ENCODE measurements at regions of chr7 and their contacts with region 1.

Region 1: DNA sequence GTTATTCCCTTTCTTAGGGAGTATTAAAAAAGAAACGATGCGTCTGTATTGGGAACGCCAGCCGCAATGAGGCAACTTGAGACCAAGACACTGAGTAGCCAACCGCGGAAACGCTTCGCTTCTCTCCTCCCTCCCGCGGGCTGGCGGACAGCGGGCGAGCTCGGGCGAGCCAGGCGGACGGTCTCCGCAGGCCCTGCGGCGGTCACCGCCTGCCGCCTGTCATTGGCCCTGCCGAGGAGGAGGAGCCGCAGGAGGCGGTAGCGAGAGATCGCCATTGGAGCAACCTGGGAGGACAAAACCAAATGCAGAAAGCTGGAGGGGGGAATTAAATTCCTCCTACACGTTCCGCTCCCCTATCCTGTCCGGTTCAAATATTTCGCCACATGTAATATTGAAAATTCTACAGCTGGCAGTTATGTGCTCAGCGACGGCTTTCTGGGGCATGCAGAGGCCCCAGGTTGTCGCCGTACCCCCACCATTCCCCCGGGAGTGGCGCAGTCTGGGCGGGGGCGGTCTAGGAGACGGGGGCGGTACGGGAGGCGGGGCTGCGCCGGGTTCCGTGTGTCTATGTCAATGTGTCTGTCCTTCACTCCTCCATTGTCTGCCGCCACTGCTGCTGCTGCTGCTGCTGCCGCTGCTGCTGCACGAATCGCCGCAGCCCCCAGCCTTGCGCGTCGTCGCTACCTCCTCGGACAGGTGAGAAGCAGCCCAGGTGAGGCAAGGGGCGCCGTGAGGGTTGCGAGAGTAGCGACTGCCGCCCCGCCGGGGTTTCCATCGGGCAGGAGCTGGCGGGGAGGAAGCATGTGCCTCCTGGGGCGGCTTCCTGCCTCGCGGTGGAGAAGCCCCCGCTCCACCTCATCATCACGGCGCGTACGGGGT is at the starts of genes ANKMY2 and BZW2:
- DNase-seq: peak; percentile 85 to 98 (median 92)
- ATAC-seq: peak; percentile 85
- H3K4me3 ChIP-seq: peak within 1 kb of the TSS; percentile 89
- H3K4me3 Mint-ChIP-seq: peak within 1 kb of the TSS; percentile 99
- H3K27ac ChIP-seq: peak within 1 kb of the TSS; percentile 75 to 88
- H3K27ac Mint-ChIP-seq: peak within 1 kb of the TSS; percentile 90
- H3K4me1 ChIP-seq: peaks cover 28% of the 10 kb centered on the region
- H3K4me1 Mint-ChIP-seq: peaks cover 78% of the 10 kb centered on the region
- H3K27me3 ChIP-seq: no peaks in the 10 kb centered on the region
- H3K27me3 Mint-ChIP-seq: no peaks in the 10 kb centered on the region
- CTCF ChIP-seq: no peak
- total RNA-seq, gene ANKMY2: 3.3 to 5.1 TPM
- total RNA-seq, gene BZW2: 15.1 to 17.2 TPM

Region 2: DNA sequence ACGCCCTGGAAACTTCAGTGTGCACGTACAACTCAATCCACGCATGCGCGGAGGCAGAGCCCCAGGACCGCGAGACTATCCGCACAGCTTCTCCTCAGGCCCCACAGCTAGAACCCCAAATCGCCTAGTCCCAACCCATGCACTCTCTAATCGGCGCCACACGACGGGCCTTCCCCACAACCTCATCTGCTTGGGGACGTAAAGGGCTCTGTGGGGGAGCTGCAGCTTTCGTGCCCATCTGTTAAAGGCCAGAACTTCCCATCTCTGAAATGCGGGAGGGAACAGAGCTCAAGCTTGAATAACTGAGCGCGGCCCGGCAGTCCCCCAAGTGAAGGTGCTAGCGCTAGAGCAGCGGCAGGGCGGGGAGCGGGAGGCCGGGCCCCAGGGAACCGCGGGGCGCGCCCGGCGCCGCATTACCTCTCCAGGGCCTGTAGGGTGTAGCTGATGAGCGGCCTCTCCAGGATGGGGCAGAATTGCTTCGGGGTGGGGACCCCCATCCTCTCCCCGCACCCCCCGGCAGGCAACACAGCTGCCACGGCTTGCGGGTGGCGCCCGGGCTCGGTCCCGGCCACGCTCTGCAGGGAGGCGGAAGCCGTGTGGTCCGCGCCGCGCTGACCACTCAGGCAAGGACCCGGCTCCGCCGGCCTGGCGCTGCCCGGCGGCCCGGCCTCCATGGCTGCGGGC is 225.0 kb before region 1 on chr7:
- CTCF ChIA-PET with region 1: no interaction called
- POLR2A ChIA-PET with region 1: interaction called, 42 read pairs
- intact Hi-C with region 1: loop called (anchors 5 kb)
- DNase-seq: peak; percentile 50 to 94 (median 78)
- ATAC-seq: peak; percentile 89
- H3K4me3 ChIP-seq: peak overlapping the region; percentile 67
- H3K4me3 Mint-ChIP-seq: peak overlapping the region; percentile 90
- H3K27ac ChIP-seq: peak overlapping the region; percentile 77 to 80
- H3K27ac Mint-ChIP-seq: peak overlapping the region; percentile 87
- H3K4me1 ChIP-seq: peaks cover 14% of the 10 kb centered on the region
- H3K4me1 Mint-ChIP-seq: peaks cover 23% of the 10 kb centered on the region
- H3K27me3 ChIP-seq: no peaks in the 10 kb centered on the region
- H3K27me3 Mint-ChIP-seq: no peaks in the 10 kb centered on the region
- CTCF ChIP-seq: peak; percentile 33

Region 3: DNA sequence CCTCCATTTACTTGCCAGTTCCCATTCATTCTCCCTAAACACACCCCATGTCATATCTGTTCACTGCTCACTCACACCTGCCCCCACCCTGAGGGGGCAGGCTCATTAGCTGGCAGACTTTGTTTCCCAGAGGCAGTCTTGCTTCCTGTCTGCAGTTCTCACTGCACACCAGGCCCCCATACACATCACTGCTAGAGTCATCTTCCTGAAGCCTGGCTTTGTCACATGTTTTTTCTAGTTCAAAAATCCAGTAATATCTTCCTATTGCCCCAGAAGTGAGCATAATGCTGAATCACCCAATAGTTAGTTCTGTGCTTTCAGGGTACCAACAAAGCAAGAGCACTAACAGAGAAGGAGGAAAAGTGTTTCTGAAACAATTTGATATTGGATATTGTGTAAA is 117.3 kb before region 1 on chr7:
- CTCF ChIA-PET with region 1: no interaction called
- POLR2A ChIA-PET with region 1: no interaction called
- intact Hi-C with region 1: no loop called
- DNase-seq: no peak
- ATAC-seq: no peak
- H3K4me3 ChIP-seq: no peak overlapping the region
- H3K4me3 Mint-ChIP-seq: no peak overlapping the region
- H3K27ac ChIP-seq: no peak overlapping the region
- H3K27ac Mint-ChIP-seq: no peak overlapping the region
- H3K4me1 ChIP-seq: no peaks in the 10 kb centered on the region
- H3K4me1 Mint-ChIP-seq: no peaks in the 10 kb centered on the region
- H3K27me3 ChIP-seq: no peaks in the 10 kb centered on the region
- H3K27me3 Mint-ChIP-seq: no peaks in the 10 kb centered on the region
- CTCF ChIP-seq: no peak

Region 4: DNA sequence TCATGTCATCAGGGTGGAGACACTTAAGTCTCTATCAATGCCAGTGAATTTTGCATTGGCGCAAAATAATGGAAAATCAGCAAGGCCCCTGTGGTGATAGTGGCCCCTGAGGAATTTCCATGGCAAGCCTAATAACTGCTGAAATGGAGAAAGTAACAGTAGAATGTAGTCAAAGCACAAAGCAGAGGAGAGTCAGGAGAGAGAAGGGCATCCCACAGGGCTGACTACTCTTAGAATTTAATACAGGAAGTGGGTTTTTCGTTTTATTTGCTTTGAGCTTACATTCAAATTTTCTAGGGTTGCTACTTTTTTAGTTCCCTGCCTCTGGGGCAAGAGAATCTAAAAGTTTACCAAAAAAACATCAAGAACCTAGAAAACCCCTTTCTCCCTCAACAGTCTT is 39.1 kb after region 1 on chr7:
- CTCF ChIA-PET with region 1: no interaction called
- POLR2A ChIA-PET with region 1: interaction called, 13 read pairs
- intact Hi-C with region 1: no loop called
- DNase-seq: peak in 2 of 14 experiments; percentile 5 to 30
- ATAC-seq: peak; percentile 46
- H3K4me3 ChIP-seq: no peak overlapping the region
- H3K4me3 Mint-ChIP-seq: no peak overlapping the region
- H3K27ac ChIP-seq: peak overlapping the region; percentile 13 to 23
- H3K27ac Mint-ChIP-seq: peak overlapping the region; percentile 67
- H3K4me1 ChIP-seq: no peaks in the 10 kb centered on the region
- H3K4me1 Mint-ChIP-seq: peaks cover 28% of the 10 kb centered on the region
- H3K27me3 ChIP-seq: no peaks in the 10 kb centered on the region
- H3K27me3 Mint-ChIP-seq: no peaks in the 10 kb centered on the region
- CTCF ChIP-seq: no peak

Region 5: DNA sequence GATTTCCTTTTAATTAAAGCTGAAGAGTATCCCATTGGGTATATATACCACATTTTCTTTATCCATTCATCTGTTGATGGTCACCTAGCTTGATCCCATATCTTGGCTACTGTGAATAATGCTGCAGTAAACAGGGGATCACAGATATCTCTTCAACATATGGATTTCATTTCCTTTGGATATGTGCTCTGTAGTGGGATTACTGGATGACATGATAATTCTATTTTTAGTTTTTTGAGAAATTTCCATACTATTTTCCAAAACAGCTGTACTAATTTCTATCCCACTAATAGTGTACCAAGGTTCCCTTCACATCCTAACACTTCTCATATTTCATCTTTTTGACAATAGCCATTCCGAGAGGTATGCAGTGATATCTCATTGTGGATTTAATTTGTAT is 1430.6 kb after region 1 on chr7:
- CTCF ChIA-PET with region 1: no interaction called
- POLR2A ChIA-PET with region 1: no interaction called
- intact Hi-C with region 1: no loop called
- DNase-seq: no peak
- ATAC-seq: no peak
- H3K4me3 ChIP-seq: no peak overlapping the region
- H3K4me3 Mint-ChIP-seq: no peak overlapping the region
- H3K27ac ChIP-seq: no peak overlapping the region
- H3K27ac Mint-ChIP-seq: no peak overlapping the region
- H3K4me1 ChIP-seq: no peaks in the 10 kb centered on the region
- H3K4me1 Mint-ChIP-seq: no peaks in the 10 kb centered on the region
- H3K27me3 ChIP-seq: no peaks in the 10 kb centered on the region
- H3K27me3 Mint-ChIP-seq: no peaks in the 10 kb centered on the region
- CTCF ChIP-seq: no peak

Measured in CD4-positive, alpha-beta T cell (primary cell).